Endothelial cell of umbilical vein (primary cell): ENCODE measurements at regions of chr15 and their contacts with region 1.

Region 1: DNA sequence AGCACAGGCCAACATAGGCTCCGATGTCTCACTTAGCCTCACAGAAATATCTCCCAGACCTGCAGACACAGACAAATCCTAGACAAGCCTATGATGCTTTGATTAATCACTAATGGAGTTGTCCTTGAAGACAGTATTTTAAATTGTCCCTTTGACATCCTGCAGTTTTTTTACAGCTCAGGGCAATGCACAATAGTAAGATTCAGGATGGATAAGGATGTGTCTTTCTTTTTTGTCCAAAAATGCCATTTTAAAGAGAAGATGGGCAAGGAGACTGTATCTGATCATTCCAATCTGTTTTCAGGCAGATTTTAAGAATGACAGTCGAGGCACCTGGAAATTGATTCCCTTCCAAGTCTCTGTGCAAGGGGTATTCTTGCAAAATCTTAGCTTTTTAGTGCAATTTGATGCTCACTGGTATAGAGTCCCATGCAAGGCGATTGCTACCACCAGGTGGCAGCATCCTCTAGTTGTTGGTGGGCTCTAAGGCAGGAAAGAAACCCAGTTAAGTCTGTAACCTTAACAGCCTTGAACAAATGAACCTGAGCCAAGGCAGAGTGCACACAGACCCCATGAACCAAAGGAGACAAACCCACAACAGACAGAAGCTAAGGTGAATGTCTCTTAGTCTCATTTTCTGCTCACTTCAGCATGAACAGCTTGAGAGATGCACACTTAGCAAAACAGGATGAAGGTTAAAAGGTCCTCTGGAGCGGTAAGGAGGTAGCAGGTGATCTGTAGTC is 51.2 kb upstream of the MINAR1 start:
- DNase-seq: peak; percentile 77
- H3K4me3 ChIP-seq: no peak overlapping the region
- H3K27ac ChIP-seq: no peak overlapping the region
- H3K4me1 ChIP-seq: no peaks in the 10 kb centered on the region
- H3K27me3 ChIP-seq: no peaks in the 10 kb centered on the region
- CTCF ChIP-seq: peak; percentile 81 to 87
- POLR2A ChIP-seq: no peak

Region 2: GRCh38 chr15:79084308-79084968 is 296.5 kb before region 1 on chr15:
- CTCF ChIA-PET with region 1: no interaction called
- POLR2A ChIA-PET with region 1: no interaction called
- dilution Hi-C with region 1: no loop called
- intact Hi-C with region 1: no loop called
- DNase-seq: no peak
- H3K4me3 ChIP-seq: no peak overlapping the region
- H3K27ac ChIP-seq: no peak overlapping the region
- H3K4me1 ChIP-seq: no peaks in the 10 kb centered on the region
- H3K27me3 ChIP-seq: peaks cover 10% of the 10 kb centered on the region in 2 experiments
- CTCF ChIP-seq: no peak
- POLR2A ChIP-seq: no peak

Region 3: DNA sequence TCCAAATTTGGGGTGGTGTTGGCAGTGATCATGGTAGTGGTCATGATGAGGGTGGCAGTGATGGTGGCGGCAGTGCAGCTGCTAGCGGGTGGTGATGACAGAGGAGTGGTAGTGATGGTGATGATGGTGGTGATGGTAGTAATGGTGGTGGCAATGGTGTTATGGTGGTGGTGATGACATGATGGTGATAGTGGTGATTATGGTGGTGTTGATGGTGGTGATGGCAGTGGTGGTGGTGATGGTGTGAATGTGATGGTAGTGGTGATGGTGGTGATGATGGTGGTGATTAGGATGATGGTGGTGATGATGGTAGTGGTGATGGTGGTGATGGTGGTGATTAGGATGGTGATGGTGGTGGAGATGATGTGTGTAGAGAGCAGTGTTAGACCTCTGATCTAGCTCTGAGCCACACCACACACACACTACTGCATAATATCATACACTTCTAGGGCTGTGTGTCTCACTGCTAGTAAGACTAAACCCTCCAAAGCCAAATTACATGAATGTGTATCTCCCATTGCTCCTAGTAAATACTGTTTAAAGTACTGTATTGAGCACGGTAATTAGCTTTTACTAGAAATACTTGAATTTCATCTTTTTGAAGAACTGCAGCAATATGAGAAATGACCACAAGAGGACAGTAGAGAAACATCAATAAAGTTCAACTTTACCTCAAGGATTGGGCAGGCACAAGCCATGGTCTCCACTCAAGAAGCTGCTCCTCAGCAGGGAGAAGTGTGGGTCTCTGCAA is 41.2 kb before region 1 on chr15:
- CTCF ChIA-PET with region 1: interaction called, 62 read pairs
- POLR2A ChIA-PET with region 1: no interaction called
- dilution Hi-C with region 1: no loop called
- intact Hi-C with region 1: no loop called
- DNase-seq: peak; percentile 69
- H3K4me3 ChIP-seq: no peak overlapping the region
- H3K27ac ChIP-seq: no peak overlapping the region
- H3K4me1 ChIP-seq: no peaks in the 10 kb centered on the region
- H3K27me3 ChIP-seq: no peaks in the 10 kb centered on the region
- CTCF ChIP-seq: peak; percentile 61 to 71
- POLR2A ChIP-seq: no peak

Region 4: DNA sequence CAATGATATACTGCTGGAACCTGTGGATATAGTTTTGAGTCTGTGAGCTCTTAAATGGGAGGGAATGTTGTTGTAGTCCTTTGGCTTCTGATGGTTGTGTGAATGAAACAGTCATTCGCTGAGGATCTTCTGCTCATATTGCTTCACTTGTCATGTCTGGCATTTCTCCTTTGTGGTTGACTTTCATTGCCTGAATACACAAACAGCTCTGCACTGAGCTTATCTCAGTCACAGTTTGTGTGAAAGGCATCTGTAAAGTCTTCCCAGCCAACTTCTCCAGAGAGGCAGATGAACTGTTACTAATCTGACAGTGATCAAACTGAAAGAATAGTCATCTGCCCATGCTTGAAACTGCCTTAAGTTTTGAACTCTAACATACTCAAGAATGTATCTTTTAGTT is 10.2 kb before region 1 on chr15:
- CTCF ChIA-PET with region 1: interaction called, 111 read pairs
- POLR2A ChIA-PET with region 1: no interaction called
- dilution Hi-C with region 1: no loop called
- intact Hi-C with region 1: no loop called
- DNase-seq: no peak
- H3K4me3 ChIP-seq: no peak overlapping the region
- H3K27ac ChIP-seq: no peak overlapping the region
- H3K4me1 ChIP-seq: no peaks in the 10 kb centered on the region
- H3K27me3 ChIP-seq: no peaks in the 10 kb centered on the region
- CTCF ChIP-seq: no peak
- POLR2A ChIP-seq: no peak

Region 5: DNA sequence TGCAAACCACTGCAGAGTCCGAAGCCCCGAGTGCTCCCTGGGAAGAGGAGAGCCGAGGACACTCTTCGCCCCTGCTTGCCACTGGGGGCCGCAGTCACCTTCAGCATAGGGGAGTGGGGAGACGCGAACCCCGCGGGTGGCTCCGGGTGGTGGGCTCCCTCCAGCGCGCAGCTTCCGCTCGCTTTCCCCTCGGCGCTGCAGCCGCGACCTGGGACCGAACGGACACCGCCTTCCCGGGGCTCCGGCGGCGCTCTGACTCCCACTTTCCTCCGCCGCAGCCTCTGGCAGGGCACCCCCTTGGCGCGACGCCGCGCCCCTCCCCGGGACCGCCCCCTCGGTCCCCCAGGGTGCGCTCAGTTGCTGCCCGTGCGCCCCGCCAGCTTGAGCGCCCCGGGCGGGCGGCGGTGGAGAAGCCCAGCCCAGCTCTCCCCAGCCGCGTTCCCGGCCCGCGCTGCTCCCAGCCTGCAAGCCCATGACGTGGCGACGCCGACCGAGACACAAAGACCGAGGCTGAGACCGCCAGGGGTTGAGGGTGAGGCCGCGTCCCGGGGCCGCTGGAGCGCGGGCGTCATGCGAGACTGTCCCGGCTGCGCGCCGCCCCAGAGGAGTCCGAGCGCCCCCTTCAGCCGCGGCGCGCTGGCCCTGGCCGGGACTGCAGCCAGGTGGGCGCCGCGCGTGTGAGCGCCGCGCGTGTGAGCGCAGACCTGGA is 50.9 kb after region 1 on chr15 and contains the start of gene MINAR1:
- CTCF ChIA-PET with region 1: interaction called, 31 read pairs
- POLR2A ChIA-PET with region 1: no interaction called
- dilution Hi-C with region 1: no loop called
- intact Hi-C with region 1: loop called (anchors 1 kb)
- DNase-seq: peak; percentile 33
- H3K4me3 ChIP-seq: peak within 1 kb of the TSS; percentile 8 to 47 (median 44)
- H3K27ac ChIP-seq: no peak within 1 kb of the TSS
- H3K4me1 ChIP-seq: peaks cover 6% of the 10 kb centered on the region
- H3K27me3 ChIP-seq: peaks cover 46 to 59% of the 10 kb centered on the region in 2 experiments
- CTCF ChIP-seq: peak; percentile 16 to 26
- POLR2A ChIP-seq: no peak
- total RNA-seq, gene MINAR1: 0.93 and 1.3 TPM in 2 replicates

Region 6: GRCh38 chr15:79844221-79844620 is 463.3 kb after region 1 on chr15:
- CTCF ChIA-PET with region 1: interaction called, 170 read pairs
- POLR2A ChIA-PET with region 1: no interaction called
- dilution Hi-C with region 1: no loop called
- intact Hi-C with region 1: loop called (anchors 1 kb)
- DNase-seq: no peak
- H3K4me3 ChIP-seq: no peak overlapping the region
- H3K27ac ChIP-seq: no peak overlapping the region
- H3K4me1 ChIP-seq: no peaks in the 10 kb centered on the region
- H3K27me3 ChIP-seq: no peaks in the 10 kb centered on the region
- CTCF ChIP-seq: no peak
- POLR2A ChIP-seq: no peak

Region 7: DNA sequence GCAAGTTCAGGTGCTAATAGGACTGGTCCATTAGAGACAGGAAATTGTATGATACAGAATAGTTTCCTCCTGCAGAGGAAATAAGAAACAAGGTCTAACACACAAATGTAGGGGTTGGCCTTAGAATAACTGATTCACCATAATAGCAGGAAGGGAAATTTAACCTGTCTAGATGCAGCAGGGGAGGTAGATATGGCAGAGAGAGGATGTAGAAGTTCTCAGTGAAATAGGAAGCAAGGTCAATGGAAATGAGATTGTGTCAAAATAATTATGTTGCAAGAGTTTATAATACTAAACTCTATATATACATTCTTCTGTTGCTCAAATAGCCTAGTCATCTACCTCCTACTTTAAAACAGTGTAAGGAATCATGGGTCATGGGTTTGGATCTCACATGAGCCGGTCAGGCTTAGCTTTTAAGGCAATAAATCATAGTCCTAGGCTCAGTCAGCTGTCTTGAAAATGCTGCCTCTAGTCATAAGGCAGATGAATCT is 573.1 kb after region 1 on chr15:
- CTCF ChIA-PET with region 1: no interaction called
- POLR2A ChIA-PET with region 1: no interaction called
- dilution Hi-C with region 1: no loop called
- intact Hi-C with region 1: no loop called
- DNase-seq: no peak
- H3K4me3 ChIP-seq: no peak overlapping the region
- H3K27ac ChIP-seq: no peak overlapping the region
- H3K4me1 ChIP-seq: no peaks in the 10 kb centered on the region
- H3K27me3 ChIP-seq: no peaks in the 10 kb centered on the region
- CTCF ChIP-seq: no peak
- POLR2A ChIP-seq: no peak

Region 8: GRCh38 chr15:80309769-80310384 is 929.0 kb after region 1 on chr15:
- CTCF ChIA-PET with region 1: interaction called, 26 read pairs
- POLR2A ChIA-PET with region 1: no interaction called
- dilution Hi-C with region 1: no loop called
- intact Hi-C with region 1: no loop called
- DNase-seq: peak; percentile 11
- H3K4me3 ChIP-seq: no peak overlapping the region
- H3K27ac ChIP-seq: no peak overlapping the region
- H3K4me1 ChIP-seq: no peaks in the 10 kb centered on the region
- H3K27me3 ChIP-seq: no peaks in the 10 kb centered on the region
- CTCF ChIP-seq: peak; percentile 24 to 33
- POLR2A ChIP-seq: no peak